ENCODE measurements at regions of chr7 and their contacts with region 1.

Region 1: DNA sequence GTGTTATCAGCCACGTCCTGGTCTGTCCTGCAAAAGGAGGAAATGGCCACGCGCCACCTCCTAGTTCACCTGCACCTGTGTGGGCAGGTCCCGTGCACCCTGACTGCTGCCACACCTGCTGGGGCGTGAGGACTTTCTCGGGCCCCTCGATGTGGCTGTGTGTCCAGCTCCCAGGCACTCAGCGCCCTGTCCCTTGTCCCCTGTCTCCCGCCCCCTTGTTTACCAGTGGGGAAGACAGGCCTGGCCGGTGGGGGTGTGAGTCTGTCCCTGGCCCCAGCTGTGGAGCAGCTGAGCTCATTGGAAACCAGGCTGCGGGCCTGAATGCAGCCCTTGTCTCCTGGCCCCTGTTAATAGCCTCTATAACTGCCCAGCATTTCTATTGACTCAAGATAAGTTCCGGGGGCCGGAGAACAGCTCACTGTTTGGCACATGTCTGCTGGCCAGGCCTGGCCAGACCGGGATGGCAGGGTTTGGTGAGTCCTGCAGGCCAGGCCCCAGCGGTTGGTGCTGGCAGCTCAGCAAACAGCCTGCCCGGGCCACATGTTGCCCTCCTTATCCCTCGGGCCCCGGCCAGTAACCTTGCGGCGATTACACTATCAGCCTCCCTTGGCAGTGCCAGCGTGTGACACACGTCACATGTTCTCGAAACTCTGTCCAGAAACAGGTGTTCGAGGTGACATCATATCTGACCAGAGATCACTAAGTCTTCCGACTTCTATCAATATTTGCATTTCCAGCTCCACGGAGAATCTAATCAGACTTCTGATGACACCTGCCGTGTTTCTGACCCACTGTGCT is 52.1 kb downstream of the FOXL3 start:
- DNase-seq: peak; percentile 90
- ATAC-seq: peak; percentile 74
- H3K4me3 ChIP-seq: peak overlapping the region in 2 of 3 experiments; percentile 10 to 57; a peak in 4 of 6 replicates
- H3K27ac ChIP-seq: peak overlapping the region; percentile 39
- H3K4me1 ChIP-seq: peaks cover 51% of the 10 kb centered on the region
- H3K27me3 ChIP-seq: peaks cover 0 to 34% of the 10 kb centered on the region in 2 experiments
- CTCF ChIP-seq: peak; percentile 24; the same call in 1 of the 2 replicates
- EP300 ChIP-seq: no peak; a peak in 1 of 4 replicates
- POLR2A ChIP-seq: no peak
- RAD21 ChIP-seq: no peak

Region 2: GRCh38 chr7:371119-371778 is 29.2 kb after region 1 on chr7:
- CTCF ChIA-PET with region 1: no interaction called
- POLR2A ChIA-PET with region 1: interaction called, 17 read pairs
- in situ Hi-C with region 1: no loop called
- intact Hi-C with region 1: loop called (anchors 2 kb)
- DNase-seq: peak; percentile 90
- ATAC-seq: peak; percentile 72
- H3K4me3 ChIP-seq: no peak overlapping the region
- H3K27ac ChIP-seq: no peak overlapping the region
- H3K4me1 ChIP-seq: peaks cover 68% of the 10 kb centered on the region
- H3K27me3 ChIP-seq: peaks cover 12 to 27% of the 10 kb centered on the region in 2 experiments; a peak in 4 of 5 replicates
- CTCF ChIP-seq: 0 out of 2 replicates have a peak, but pooled peaks have one; percentile 11
- EP300 ChIP-seq: peak in 1 of 2 experiments; percentile 70; a peak in 1 of 4 replicates
- POLR2A ChIP-seq: no peak
- RAD21 ChIP-seq: 0 out of 2 replicates have a peak, but pooled peaks have one; percentile 13